CD8-positive, alpha-beta T cell (primary cell): ENCODE measurements at regions of chr11 and their contacts with region 1.

Region 1: DNA sequence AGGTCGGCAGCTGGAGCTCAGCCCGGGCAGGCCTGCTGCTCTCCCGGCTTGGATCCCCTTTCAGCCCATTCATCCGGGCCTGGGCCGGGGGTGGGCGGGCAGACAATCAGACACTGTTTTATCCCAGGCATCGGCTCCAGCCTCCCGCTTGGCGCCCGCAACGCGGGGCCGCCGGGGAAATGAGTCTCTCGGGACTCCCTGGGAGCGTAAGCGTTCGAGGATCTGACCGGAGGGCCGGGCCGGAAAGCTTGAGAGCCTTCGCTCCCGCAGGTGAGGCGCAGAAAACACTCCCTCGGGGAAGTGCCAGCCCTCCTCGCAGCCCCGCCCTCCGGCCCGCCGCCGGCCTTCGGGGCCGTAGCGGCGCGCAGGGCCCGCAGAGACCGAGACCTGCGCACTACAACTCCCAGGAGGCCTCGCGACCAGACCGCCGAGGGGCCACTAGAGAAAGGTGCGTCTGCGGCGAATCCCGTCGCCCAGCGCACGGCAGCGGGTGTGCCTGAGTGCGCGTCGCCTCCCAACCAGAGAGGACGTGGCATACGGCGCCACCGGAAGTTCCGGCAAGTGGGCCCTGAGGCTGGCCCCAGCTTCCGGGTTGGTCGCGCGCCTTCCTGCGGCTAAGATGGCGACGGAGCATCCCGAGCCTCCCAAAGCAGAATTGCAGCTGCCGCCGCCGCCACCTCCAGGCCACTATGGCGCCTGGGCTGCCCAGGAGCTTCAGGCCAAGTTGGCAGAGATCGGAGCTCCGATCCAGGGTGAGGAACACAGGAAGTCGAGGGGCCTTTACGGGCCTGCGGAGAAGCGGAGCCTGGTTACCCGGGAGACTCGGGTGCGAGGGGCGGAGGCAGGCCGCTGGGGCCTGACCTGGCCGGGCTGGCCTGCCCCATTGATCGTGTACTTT is at the start of gene SF3B2:
- DNase-seq: peak; percentile 88 to 99 (median 94)
- ATAC-seq: peak; percentile 97
- H3K4me3 ChIP-seq: peak within 1 kb of the TSS; percentile 97 to 99
- H3K4me3 Mint-ChIP-seq: peak within 1 kb of the TSS; percentile 98
- H3K27ac ChIP-seq: peak within 1 kb of the TSS; percentile 87 to 91
- H3K27ac Mint-ChIP-seq: peak within 1 kb of the TSS; percentile 97
- H3K4me1 ChIP-seq: peaks cover 29% of the 10 kb centered on the region
- H3K4me1 Mint-ChIP-seq: peaks cover 32% of the 10 kb centered on the region
- H3K27me3 ChIP-seq: no peaks in the 10 kb centered on the region
- H3K27me3 Mint-ChIP-seq: no peaks in the 10 kb centered on the region
- CTCF ChIP-seq: no peak
- total RNA-seq, gene SF3B2: 196 to 217 TPM

Region 2: GRCh38 chr11:65961232-65961901 is 90.6 kb before region 1 on chr11 and contains the start of gene SART1:
- CTCF ChIA-PET with region 1: no interaction called
- POLR2A ChIA-PET with region 1: no interaction called
- intact Hi-C with region 1: loop called (anchors 1 to 5 kb)
- DNase-seq: peak; percentile 92 to 99 (median 96)
- ATAC-seq: peak; percentile 88
- H3K4me3 ChIP-seq: peak within 1 kb of the TSS; percentile 62 to 65
- H3K4me3 Mint-ChIP-seq: peak within 1 kb of the TSS; percentile 98
- H3K27ac ChIP-seq: peak within 1 kb of the TSS; percentile 83 to 85
- H3K27ac Mint-ChIP-seq: peak within 1 kb of the TSS; percentile 99
- H3K4me1 ChIP-seq: peaks cover 38% of the 10 kb centered on the region
- H3K4me1 Mint-ChIP-seq: peaks cover 53% of the 10 kb centered on the region
- H3K27me3 ChIP-seq: no peaks in the 10 kb centered on the region
- H3K27me3 Mint-ChIP-seq: no peaks in the 10 kb centered on the region
- CTCF ChIP-seq: no peak
- total RNA-seq, gene SART1: 102 to 123 TPM

Region 3: DNA sequence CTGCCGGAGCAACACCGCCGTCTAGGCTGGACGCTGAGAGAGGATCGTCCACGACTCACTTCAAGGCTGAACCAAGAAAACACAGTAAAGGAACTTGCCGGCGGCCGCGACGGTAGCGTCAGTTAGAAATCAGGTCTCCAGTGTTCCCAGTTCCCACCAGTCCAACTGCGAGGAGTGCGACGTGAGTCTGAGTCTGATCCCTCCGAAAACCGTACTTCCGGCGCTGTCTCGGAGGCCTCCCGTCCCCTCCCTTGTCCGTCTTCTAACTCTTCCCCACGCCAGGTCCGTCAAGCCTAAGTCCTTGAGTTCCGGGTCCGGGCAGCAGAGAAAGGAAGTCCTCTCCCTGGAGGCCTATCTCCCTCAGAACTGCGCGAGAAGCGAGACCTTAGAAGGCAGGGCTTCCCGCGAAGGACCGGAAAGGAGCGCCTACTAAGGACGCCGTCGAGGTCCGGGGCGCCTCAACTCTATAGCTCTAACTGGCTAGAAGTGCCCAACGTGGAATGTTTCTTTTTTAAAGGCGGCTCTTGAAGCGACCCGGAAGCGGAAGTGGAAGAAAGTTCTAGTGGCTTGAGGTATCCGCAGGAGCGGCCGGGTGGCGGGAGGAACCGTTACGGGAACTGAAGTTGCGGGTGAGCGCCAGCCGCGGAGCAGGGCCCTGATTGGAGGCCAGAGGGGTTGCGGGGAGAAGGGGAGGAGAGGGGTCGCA is 49.9 kb before region 1 on chr11 and contains the starts of genes BANF1 and EIF1AD:
- CTCF ChIA-PET with region 1: no interaction called
- POLR2A ChIA-PET with region 1: interaction called, 4 read pairs
- intact Hi-C with region 1: loop called (anchors 1 kb)
- DNase-seq: peak; percentile 85 to 98 (median 92)
- ATAC-seq: peak; percentile 83
- H3K4me3 ChIP-seq: peak within 1 kb of the TSS; percentile 80 to 98
- H3K4me3 Mint-ChIP-seq: peak within 1 kb of the TSS; percentile 99
- H3K27ac ChIP-seq: peak within 1 kb of the TSS; percentile 93 to 95
- H3K27ac Mint-ChIP-seq: peak within 1 kb of the TSS; percentile 98
- H3K4me1 ChIP-seq: peaks cover 21% of the 10 kb centered on the region
- H3K4me1 Mint-ChIP-seq: peaks cover 43% of the 10 kb centered on the region
- H3K27me3 ChIP-seq: no peaks in the 10 kb centered on the region
- H3K27me3 Mint-ChIP-seq: no peaks in the 10 kb centered on the region
- CTCF ChIP-seq: no peak
- total RNA-seq, gene BANF1: 31.6 to 34.0 TPM
- total RNA-seq, gene EIF1AD: 119 to 126 TPM

Region 4: GRCh38 chr11:66081505-66081904 is 29.5 kb after region 1 on chr11:
- CTCF ChIA-PET with region 1: interaction called, 5 read pairs
- POLR2A ChIA-PET with region 1: interaction called, 11 read pairs
- intact Hi-C with region 1: loop called in 1 of 2 experiments (anchors 1 kb)
- DNase-seq: peak; percentile 58 to 92 (median 85)
- ATAC-seq: peak; percentile 89
- H3K4me3 ChIP-seq: peak overlapping the region; percentile 28 to 40
- H3K4me3 Mint-ChIP-seq: peak overlapping the region; percentile 83
- H3K27ac ChIP-seq: peak overlapping the region; percentile 72 to 89
- H3K27ac Mint-ChIP-seq: peak overlapping the region; percentile 99
- H3K4me1 ChIP-seq: peaks cover 90% of the 10 kb centered on the region
- H3K4me1 Mint-ChIP-seq: peaks cover 92% of the 10 kb centered on the region
- H3K27me3 ChIP-seq: no peaks in the 10 kb centered on the region
- H3K27me3 Mint-ChIP-seq: no peaks in the 10 kb centered on the region
- CTCF ChIP-seq: no peak

Region 5: GRCh38 chr11:66112601-66113098 is 60.6 kb after region 1 on chr11:
- CTCF ChIA-PET with region 1: interaction called, 5 read pairs
- POLR2A ChIA-PET with region 1: interaction called, 12 read pairs
- intact Hi-C with region 1: no loop called
- DNase-seq: no peak
- ATAC-seq: no peak
- H3K4me3 ChIP-seq: no peak overlapping the region
- H3K4me3 Mint-ChIP-seq: peak overlapping the region; percentile 38
- H3K27ac ChIP-seq: peak overlapping the region in 1 of 2 experiments; percentile 47
- H3K27ac Mint-ChIP-seq: peak overlapping the region; percentile 89
- H3K4me1 ChIP-seq: peaks cover 88% of the 10 kb centered on the region
- H3K4me1 Mint-ChIP-seq: peaks cover 94% of the 10 kb centered on the region
- H3K27me3 ChIP-seq: no peaks in the 10 kb centered on the region
- H3K27me3 Mint-ChIP-seq: no peaks in the 10 kb centered on the region
- CTCF ChIP-seq: no peak

Region 6: DNA sequence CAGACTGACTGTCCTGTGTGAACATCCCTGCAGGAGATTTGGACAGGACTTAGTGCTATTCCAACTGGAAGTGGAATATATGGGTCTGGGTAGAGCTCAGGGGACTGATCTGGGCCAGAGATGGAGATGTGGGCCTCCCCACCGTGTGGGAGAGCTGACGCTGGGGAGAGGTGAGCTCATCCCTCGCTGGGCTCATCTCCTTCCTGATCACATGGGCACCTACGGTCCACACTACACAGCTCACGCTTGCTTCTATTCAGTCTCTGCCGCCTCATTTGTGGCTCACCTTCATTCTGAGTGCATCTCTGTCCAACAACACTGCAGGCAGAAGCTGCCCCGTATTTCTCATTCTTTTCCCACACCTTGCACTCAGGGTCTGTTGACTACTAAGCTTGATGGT is 199.8 kb after region 1 on chr11:
- CTCF ChIA-PET with region 1: no interaction called
- POLR2A ChIA-PET with region 1: no interaction called
- intact Hi-C with region 1: no loop called
- DNase-seq: no peak
- ATAC-seq: no peak
- H3K4me3 ChIP-seq: no peak overlapping the region
- H3K4me3 Mint-ChIP-seq: no peak overlapping the region
- H3K27ac ChIP-seq: no peak overlapping the region
- H3K27ac Mint-ChIP-seq: peak overlapping the region; percentile 73
- H3K4me1 ChIP-seq: peaks cover 15% of the 10 kb centered on the region
- H3K4me1 Mint-ChIP-seq: peaks cover 10% of the 10 kb centered on the region
- H3K27me3 ChIP-seq: no peaks in the 10 kb centered on the region
- H3K27me3 Mint-ChIP-seq: no peaks in the 10 kb centered on the region
- CTCF ChIP-seq: no peak

Region 7: GRCh38 chr11:66268283-66268951 is 216.4 kb after region 1 on chr11 and contains the start of gene RAB1B:
- CTCF ChIA-PET with region 1: no interaction called
- POLR2A ChIA-PET with region 1: no interaction called
- intact Hi-C with region 1: loop called (anchors 1 to 5 kb)
- DNase-seq: peak; percentile 99 to 100 (median 100)
- ATAC-seq: peak; percentile 75
- H3K4me3 ChIP-seq: peak within 1 kb of the TSS; percentile 89 to 97
- H3K4me3 Mint-ChIP-seq: peak within 1 kb of the TSS; percentile 97
- H3K27ac ChIP-seq: peak within 1 kb of the TSS; percentile 83 to 91
- H3K27ac Mint-ChIP-seq: peak within 1 kb of the TSS; percentile 97
- H3K4me1 ChIP-seq: peaks cover 43% of the 10 kb centered on the region
- H3K4me1 Mint-ChIP-seq: peaks cover 50% of the 10 kb centered on the region
- H3K27me3 ChIP-seq: no peaks in the 10 kb centered on the region
- H3K27me3 Mint-ChIP-seq: no peaks in the 10 kb centered on the region
- CTCF ChIP-seq: no peak
- total RNA-seq, gene RAB1B: 34.4 to 36.3 TPM

Region 8: DNA sequence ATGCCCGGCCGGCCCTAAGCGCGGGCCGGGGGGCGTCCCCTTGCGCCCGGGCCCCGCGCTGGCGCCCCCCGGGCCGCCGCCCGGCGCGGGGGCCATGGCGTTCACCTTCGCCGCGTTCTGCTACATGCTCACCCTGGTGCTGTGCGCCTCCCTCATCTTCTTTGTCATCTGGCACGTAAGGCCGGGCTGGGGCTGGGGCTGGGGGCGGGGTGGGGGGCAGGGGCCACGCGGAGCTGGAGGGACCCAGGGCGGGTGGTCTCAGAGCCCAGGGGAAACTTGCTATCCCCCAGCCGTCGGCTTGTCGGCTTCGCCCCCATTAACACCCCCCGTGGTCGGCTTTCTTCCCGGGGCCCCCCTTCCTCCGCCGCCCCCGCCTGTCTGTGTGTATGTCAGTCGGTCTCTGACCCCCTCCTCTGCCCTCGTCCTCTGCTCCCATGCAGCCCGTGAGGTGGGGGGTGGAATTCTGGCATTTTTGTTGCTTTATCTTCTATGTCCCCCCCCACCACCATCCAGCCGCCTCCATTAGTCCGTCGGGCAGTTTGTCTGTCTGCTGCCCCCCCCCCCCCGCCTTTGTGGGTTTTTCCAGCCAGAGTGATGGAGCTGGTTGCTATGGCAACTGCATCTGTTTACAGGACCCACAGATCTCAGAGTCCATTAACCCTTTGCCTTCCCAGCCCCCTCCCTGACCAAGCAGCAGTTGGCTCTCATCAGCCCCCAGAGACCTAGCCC is 226.5 kb after region 1 on chr11:
- CTCF ChIA-PET with region 1: no interaction called
- POLR2A ChIA-PET with region 1: no interaction called
- intact Hi-C with region 1: no loop called
- DNase-seq: peak in 3 of 9 experiments; percentile 43 to 75 (median 70)
- ATAC-seq: peak; percentile 7
- H3K4me3 ChIP-seq: no peak overlapping the region
- H3K4me3 Mint-ChIP-seq: peak overlapping the region; percentile 64
- H3K27ac ChIP-seq: no peak overlapping the region
- H3K27ac Mint-ChIP-seq: peak overlapping the region; percentile 41
- H3K4me1 ChIP-seq: peaks cover 29% of the 10 kb centered on the region
- H3K4me1 Mint-ChIP-seq: peaks cover 41% of the 10 kb centered on the region
- H3K27me3 ChIP-seq: peaks cover 0 to 5% of the 10 kb centered on the region in 2 experiments
- H3K27me3 Mint-ChIP-seq: no peaks in the 10 kb centered on the region
- CTCF ChIP-seq: no peak

Region 9: DNA sequence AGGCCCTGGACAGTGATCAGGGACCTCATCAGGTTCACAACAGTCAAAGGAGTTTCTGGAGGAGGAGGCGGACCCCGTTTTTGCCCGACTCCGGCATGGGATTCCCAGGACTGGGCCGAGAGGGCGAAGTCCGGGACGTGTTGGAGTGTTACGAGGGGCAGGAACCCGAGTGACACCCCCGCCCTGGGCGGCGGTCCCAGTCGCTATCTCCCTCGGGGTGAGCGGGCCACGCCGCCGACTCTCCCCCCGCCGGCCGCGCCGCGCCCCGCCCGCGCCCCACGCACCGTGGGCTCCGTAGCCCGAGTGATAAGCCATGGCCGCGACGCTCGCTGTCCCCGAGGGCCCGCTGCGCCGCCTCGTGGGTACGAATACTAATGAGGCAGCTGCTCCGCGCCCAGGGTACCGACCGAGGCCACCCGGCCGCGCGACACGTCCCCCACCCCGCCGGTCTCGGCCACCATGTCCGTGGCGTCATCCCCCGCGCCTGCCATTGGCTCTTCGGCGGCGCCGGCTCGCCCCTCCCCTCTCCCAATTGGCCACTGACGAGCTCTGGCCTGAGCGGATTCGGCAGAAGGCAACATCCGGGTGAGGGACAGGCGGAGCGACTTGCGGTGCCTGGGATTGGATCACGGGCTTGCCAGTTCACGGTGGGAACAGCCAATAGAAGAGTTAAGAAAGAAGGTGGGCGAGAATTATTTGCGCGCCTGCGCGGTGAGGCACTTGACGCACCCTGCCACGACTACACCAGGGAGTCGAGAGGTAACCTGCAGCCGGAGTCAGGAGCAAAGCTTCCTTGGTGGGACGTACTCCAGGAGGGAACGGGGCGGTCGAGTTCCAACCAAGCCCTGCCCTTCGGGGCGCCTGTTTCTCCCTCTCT is 236.9 kb after region 1 on chr11 and contains the start of gene YIF1A:
- CTCF ChIA-PET with region 1: no interaction called
- POLR2A ChIA-PET with region 1: no interaction called
- intact Hi-C with region 1: loop called in 1 of 2 experiments (anchors 1 kb)
- DNase-seq: peak; percentile 96 to 99 (median 98)
- ATAC-seq: peak; percentile 90
- H3K4me3 ChIP-seq: peak within 1 kb of the TSS; percentile 67 to 80
- H3K4me3 Mint-ChIP-seq: peak within 1 kb of the TSS; percentile 82
- H3K27ac ChIP-seq: peak within 1 kb of the TSS; percentile 75 to 81
- H3K27ac Mint-ChIP-seq: peak within 1 kb of the TSS; percentile 85
- H3K4me1 ChIP-seq: peaks cover 27% of the 10 kb centered on the region
- H3K4me1 Mint-ChIP-seq: peaks cover 42% of the 10 kb centered on the region
- H3K27me3 ChIP-seq: peaks cover 16 to 17% of the 10 kb centered on the region in 2 experiments
- H3K27me3 Mint-ChIP-seq: peaks cover 13% of the 10 kb centered on the region
- CTCF ChIP-seq: no peak
- total RNA-seq, gene YIF1A: 16.8 to 17.1 TPM